Tibial artery (tissue), 4 donors: ENCODE measurements at regions of chr11 and their contacts with region 1.

Region 1: GRCh38 chr11:65314501-65315203 is at the start of gene CDC42EP2:
- DNase-seq: peak; percentile 79 to 95
- H3K4me3 ChIP-seq: peak within 1 kb of the TSS; percentile 64 to 68
- H3K27ac ChIP-seq: peak within 1 kb of the TSS; percentile 71 to 85
- H3K4me1 ChIP-seq: peaks cover 0 to 36% (median 10%) of the 10 kb centered on the region in 4 donors
- H3K27me3 ChIP-seq: no peaks in the 10 kb centered on the region
- CTCF ChIP-seq: peak in 1 of 2 experiments; percentile 28

Region 2: DNA sequence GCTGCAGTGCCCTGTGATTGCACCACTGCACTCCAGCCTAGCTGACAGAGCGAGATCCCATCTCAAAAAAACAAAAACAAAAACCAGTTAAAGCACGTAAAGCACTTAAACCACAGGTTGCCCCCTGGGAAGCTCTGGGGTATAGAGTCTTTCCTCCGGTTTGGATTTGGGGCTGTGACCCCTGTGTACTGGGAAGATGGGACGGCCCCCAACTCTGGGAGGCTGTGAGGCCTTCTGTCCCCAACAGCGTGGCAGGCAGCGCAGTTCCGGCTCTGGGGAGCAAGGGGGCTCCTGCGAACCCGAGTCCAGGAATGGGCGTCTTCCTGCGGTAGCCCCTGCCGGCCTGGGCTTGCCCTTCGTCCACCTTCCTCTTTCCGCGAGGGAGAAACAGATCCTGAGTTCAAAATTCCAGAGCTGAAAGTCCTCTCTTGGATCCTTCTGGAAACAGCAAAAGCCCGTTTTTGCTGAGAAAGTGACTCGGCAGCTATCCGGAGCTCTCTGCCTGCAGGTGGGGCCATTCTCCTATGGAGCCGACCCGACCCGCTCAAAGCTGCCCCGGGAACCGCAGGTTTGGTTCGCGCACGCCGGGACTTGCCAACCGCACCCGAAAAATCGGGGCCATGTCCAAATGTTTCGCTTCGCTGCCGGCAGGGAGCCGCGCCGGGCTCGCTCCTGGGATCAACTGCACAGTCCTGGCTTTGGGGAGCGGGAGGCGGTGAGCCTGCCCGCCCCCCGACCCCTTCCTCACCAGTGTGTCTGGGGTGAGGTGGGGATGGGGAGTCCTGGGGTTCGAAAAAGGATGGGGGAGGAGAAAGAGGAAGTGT is 89.2 kb before region 1 on chr11:
- intact Hi-C with region 1: loop called (anchors 5 kb)
- DNase-seq: peak; percentile 59 to 75
- H3K4me3 ChIP-seq: peak overlapping the region; percentile 35 to 49
- H3K27ac ChIP-seq: peak overlapping the region; percentile 2 to 54
- H3K4me1 ChIP-seq: peaks cover 0 to 15% (median 5%) of the 10 kb centered on the region in 4 donors
- H3K27me3 ChIP-seq: no peaks in the 10 kb centered on the region
- CTCF ChIP-seq: peak; percentile 32

Region 3: GRCh38 chr11:65274735-65275682 is 39.6 kb before region 1 on chr11:
- intact Hi-C with region 1: loop called (anchors 2 kb)
- DNase-seq: peak; percentile 78 to 81
- H3K4me3 ChIP-seq: no peak overlapping the region
- H3K27ac ChIP-seq: peak overlapping the region in 1 of 2 donors; percentile 24
- H3K4me1 ChIP-seq: peaks cover 0 to 13% (median 2%) of the 10 kb centered on the region in 4 donors
- H3K27me3 ChIP-seq: no peaks in the 10 kb centered on the region
- CTCF ChIP-seq: peak; percentile 76 to 96

Region 4: DNA sequence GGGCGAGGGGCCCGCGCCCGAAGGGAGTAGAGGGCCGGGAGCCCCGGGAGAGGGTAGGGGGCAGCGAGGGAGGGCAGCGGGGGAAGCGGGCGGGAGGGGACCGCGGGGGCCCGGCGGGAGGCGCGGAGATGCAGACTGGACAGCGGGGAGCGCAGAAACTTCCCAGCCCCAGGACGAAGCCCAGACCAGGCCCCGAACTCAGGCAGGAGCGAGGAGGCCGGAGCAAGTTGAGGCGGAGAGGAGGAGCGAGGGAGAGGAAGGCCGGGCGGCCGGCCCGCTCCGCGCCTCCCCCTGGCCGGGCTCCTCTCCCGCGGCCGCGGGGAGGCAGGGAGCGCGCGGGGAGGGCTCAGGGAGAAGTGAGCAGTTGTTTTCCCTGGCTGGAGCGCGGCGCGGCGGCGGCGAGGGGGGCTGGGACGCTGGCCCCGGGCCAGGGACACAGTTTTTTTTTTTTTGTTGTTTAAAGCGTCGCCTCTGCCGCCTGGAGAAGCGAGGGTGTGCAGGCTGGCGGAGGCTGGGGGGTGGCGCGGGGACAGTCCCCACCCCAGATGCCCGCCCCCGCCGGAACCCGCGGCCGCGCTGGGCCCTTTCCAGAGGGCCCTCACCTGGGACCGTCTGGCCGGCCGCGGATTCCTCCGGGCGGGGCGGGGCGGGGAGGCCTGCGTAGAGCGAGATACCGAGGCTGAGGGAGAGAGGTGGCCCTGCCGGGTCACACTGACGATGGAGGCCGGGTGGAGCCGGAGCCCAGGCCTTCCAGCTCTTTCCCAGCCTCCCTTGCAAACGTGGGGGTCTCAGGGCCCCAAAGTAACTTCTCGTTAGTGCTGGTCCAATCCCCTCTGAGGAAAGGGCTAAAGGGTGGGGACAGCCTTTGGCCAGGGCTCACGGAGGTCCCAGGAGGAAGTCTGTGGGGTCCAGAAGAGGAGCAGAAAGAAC is 243.6 kb after region 1 on chr11 and contains the start of gene LTBP3:
- intact Hi-C with region 1: no loop called
- DNase-seq: peak; percentile 89 to 96
- H3K4me3 ChIP-seq: peak within 1 kb of the TSS; percentile 58 to 75
- H3K27ac ChIP-seq: peak within 1 kb of the TSS; percentile 96 to 98
- H3K4me1 ChIP-seq: peaks cover 9 to 73% (median 66%) of the 10 kb centered on the region in 4 donors
- H3K27me3 ChIP-seq: no peaks in the 10 kb centered on the region
- CTCF ChIP-seq: no peak